Calu3 (cell line): ENCODE measurements at regions of chr7 and their contacts with region 1.

Region 1: GRCh38 chr7:8436965-8437364 is 3.6 kb downstream of the NXPH1 start:
- DNase-seq: peak; percentile 92
- H3K4me3 Mint-ChIP-seq: peak overlapping the region; percentile 63
- H3K27ac Mint-ChIP-seq: no peak overlapping the region
- H3K4me1 Mint-ChIP-seq: peaks cover 9% of the 10 kb centered on the region
- H3K27me3 Mint-ChIP-seq: peaks cover 45% of the 10 kb centered on the region
- CTCF ChIP-seq: peak; percentile 96

Region 2: GRCh38 chr7:8343556-8343955 is 93.4 kb before region 1 on chr7:
- CTCF ChIA-PET with region 1: no interaction called
- intact Hi-C with region 1: no loop called
- DNase-seq: no peak
- H3K4me3 Mint-ChIP-seq: no peak overlapping the region
- H3K27ac Mint-ChIP-seq: no peak overlapping the region
- H3K4me1 Mint-ChIP-seq: no peaks in the 10 kb centered on the region
- H3K27me3 Mint-ChIP-seq: no peaks in the 10 kb centered on the region
- CTCF ChIP-seq: no peak

Region 3: DNA sequence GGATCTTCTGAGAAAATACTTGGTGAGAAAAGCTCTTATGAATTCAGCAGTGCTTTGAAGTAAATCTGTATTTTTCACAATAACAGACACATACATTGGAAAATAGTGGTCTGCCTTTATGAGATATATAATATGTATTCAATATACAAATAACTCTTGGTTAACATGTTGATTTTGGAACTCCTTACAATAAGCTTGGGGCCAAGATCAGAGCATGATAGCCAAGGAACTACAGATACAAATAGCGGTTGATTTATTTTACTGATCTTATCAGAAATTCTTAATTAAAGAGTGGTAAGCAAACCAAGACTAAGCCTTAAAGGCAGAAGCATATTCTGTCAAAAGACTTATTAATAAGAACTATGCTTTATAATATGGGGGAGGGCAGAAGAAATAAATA is 28.1 kb before region 1 on chr7:
- CTCF ChIA-PET with region 1: no interaction called
- intact Hi-C with region 1: no loop called
- DNase-seq: no peak
- H3K4me3 Mint-ChIP-seq: no peak overlapping the region
- H3K27ac Mint-ChIP-seq: no peak overlapping the region
- H3K4me1 Mint-ChIP-seq: no peaks in the 10 kb centered on the region
- H3K27me3 Mint-ChIP-seq: peaks cover 18% of the 10 kb centered on the region
- CTCF ChIP-seq: no peak

Region 4: DNA sequence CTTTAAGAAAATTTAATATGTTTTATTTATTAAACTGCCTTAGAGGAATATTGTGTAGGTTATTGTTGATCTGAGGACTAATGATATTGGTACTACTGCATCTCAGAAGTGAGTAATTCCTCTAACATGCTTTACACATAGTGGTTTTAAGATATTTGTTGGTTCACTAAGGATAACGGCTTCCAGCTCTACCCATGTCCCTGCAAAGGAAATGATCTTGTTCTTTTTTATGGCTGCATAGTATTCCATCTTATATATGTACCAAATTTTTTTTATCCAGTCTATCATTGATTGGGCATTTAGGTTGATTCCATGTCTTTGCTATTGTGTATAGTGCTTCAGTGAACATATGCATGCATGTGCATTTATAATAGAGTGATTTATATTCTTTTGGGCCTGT is 16.6 kb after region 1 on chr7:
- CTCF ChIA-PET with region 1: no interaction called
- intact Hi-C with region 1: no loop called
- DNase-seq: no peak
- H3K4me3 Mint-ChIP-seq: no peak overlapping the region
- H3K27ac Mint-ChIP-seq: no peak overlapping the region
- H3K4me1 Mint-ChIP-seq: peaks cover 8% of the 10 kb centered on the region
- H3K27me3 Mint-ChIP-seq: no peaks in the 10 kb centered on the region
- CTCF ChIP-seq: no peak

Region 5: DNA sequence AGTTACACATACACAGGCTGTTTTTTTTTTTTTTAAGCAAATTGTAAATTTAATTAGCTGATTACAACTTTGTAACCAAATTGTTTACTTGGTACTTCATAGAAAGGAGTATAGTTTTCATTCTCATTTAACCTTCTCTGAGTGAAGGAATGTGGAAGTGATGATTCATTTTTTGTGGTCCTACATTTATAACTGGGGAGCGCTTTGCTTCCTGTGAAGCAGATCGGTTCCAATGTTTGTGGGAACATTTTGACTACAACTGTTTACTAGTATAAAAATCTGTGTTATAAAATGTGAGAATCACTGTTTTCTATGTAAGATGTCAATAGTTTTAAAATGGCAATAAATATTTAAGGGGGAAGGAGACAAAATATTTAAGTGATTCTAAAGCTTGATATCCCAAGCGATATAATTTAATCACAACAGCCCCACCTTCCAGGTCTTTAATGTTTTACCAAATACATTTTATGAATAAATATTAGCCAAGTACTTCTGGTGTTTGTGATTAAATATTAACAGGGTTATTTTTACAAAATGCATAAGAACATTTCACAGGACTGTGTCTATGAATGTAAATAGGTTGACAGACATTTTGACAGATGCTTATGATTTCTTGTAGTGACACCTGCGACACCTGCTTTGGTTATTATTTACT is 53.6 kb after region 1 on chr7:
- CTCF ChIA-PET with region 1: interaction called, 3 read pairs
- intact Hi-C with region 1: loop called (anchors 1 kb)
- DNase-seq: no peak
- H3K4me3 Mint-ChIP-seq: peak overlapping the region; percentile 32
- H3K27ac Mint-ChIP-seq: peak overlapping the region; percentile 40
- H3K4me1 Mint-ChIP-seq: peaks cover 46% of the 10 kb centered on the region
- H3K27me3 Mint-ChIP-seq: no peaks in the 10 kb centered on the region
- CTCF ChIP-seq: no peak

Region 6: GRCh38 chr7:8605221-8605620 is 168.3 kb after region 1 on chr7:
- CTCF ChIA-PET with region 1: interaction called, 4 read pairs
- intact Hi-C with region 1: loop called (anchors 5 kb)
- DNase-seq: no peak
- H3K4me3 Mint-ChIP-seq: no peak overlapping the region
- H3K27ac Mint-ChIP-seq: no peak overlapping the region
- H3K4me1 Mint-ChIP-seq: no peaks in the 10 kb centered on the region
- H3K27me3 Mint-ChIP-seq: no peaks in the 10 kb centered on the region
- CTCF ChIP-seq: no peak

Region 7: GRCh38 chr7:8627325-8627724 is 190.4 kb after region 1 on chr7:
- CTCF ChIA-PET with region 1: no interaction called
- intact Hi-C with region 1: loop called (anchors 2 kb)
- DNase-seq: no peak
- H3K4me3 Mint-ChIP-seq: no peak overlapping the region
- H3K27ac Mint-ChIP-seq: no peak overlapping the region
- H3K4me1 Mint-ChIP-seq: no peaks in the 10 kb centered on the region
- H3K27me3 Mint-ChIP-seq: no peaks in the 10 kb centered on the region
- CTCF ChIP-seq: no peak

Region 8: GRCh38 chr7:8702807-8703206 is 265.8 kb after region 1 on chr7:
- CTCF ChIA-PET with region 1: no interaction called
- intact Hi-C with region 1: loop called (anchors 5 kb)
- DNase-seq: no peak
- H3K4me3 Mint-ChIP-seq: no peak overlapping the region
- H3K27ac Mint-ChIP-seq: no peak overlapping the region
- H3K4me1 Mint-ChIP-seq: no peaks in the 10 kb centered on the region
- H3K27me3 Mint-ChIP-seq: no peaks in the 10 kb centered on the region
- CTCF ChIP-seq: no peak

Region 9: GRCh38 chr7:8724080-8724718 is 287.2 kb after region 1 on chr7:
- CTCF ChIA-PET with region 1: interaction called, 7 read pairs
- intact Hi-C with region 1: loop called (anchors 1 kb)
- DNase-seq: peak; percentile 74
- H3K4me3 Mint-ChIP-seq: no peak overlapping the region
- H3K27ac Mint-ChIP-seq: no peak overlapping the region
- H3K4me1 Mint-ChIP-seq: no peaks in the 10 kb centered on the region
- H3K27me3 Mint-ChIP-seq: no peaks in the 10 kb centered on the region
- CTCF ChIP-seq: peak; percentile 86

Region 10: GRCh38 chr7:8823486-8823885 is 386.5 kb after region 1 on chr7:
- CTCF ChIA-PET with region 1: no interaction called
- intact Hi-C with region 1: loop called (anchors 5 kb)
- DNase-seq: no peak
- H3K4me3 Mint-ChIP-seq: no peak overlapping the region
- H3K27ac Mint-ChIP-seq: no peak overlapping the region
- H3K4me1 Mint-ChIP-seq: no peaks in the 10 kb centered on the region
- H3K27me3 Mint-ChIP-seq: no peaks in the 10 kb centered on the region
- CTCF ChIP-seq: no peak